Motor neuron (in vitro differentiated cells): ENCODE measurements at regions of chr1 and their contacts with region 1.

Region 1: DNA sequence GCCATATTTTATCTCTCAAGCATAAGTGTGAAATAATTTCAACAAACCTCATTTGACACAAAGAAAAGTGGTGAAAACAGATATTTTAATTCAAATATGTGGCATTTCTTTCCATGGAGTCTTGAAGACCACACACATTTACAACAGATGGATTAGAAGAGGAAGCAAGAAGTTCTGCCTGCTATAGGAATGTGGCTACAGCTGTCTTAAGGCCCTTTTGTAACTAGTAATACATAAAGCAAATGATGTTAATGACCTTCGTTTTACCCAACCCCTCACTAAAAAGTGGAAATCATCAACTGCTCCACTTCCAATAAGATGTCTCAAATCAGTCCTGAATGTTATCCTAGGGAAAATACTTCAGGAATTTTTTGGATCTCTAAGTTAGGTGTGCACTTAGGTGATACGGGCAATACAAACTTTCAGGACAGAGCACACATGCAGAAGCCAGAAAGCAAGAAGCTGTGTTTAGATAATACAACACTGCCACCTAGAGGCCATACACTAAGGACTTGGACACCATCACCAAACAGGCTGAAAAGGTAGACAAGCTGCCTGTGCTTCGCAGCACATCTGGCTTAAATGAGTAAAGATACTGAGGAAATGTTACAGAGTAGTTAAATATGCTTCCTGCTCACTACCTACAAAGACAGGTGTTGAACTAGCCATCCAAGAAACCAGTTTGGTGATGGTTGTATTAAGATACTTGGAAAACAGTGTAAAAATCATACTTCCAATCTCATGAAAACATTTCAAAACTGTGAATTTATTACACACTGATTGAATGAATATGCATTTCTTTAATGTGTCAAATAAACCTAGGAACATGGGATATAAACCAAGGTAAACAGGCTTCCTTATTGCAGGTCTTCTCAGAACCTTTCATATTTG is 24.4 kb downstream of the RRAGC start:
- ATAC-seq: peak; percentile 67 to 97 (median 95)
- H3K4me3 ChIP-seq: no peak overlapping the region
- H3K27ac ChIP-seq: no peak overlapping the region
- H3K4me1 ChIP-seq: peaks cover 5 to 8% of the 10 kb centered on the region in 2 donors

Region 2: DNA sequence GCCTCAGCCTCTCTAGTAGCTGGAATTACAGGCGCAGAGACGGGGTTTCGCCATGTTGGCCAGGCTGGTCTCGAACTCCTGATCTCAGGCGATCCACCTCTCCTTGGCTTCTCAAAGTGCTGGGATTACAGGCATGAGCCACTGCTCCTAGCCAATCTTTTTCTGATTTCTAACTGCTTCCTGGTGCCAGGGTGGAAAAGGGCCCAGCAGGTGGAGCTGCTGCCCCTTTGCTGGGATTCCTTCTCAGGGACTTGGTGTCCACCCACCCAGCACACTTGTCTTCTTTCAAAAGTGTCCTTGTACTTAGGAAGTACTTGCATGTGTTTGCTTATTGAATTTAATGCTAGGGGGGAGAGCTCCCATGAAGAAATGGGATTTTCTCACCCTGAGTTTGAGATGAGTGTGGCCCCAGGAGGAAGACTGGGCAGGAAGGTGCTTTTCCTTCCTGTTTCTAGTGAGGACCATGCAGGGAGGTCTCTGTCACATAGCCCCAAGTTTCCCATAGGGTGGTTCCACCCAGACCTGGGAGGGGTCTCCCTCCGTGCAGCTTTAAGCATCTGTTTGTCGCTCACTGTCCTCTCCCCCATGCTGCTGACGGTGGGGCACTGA is 808.5 kb before region 1 on chr1:
- in situ Hi-C with region 1: loop called in 4 of 9 experiments (anchors 10 to 25 kb)
- ATAC-seq: peak in 4 of 8 experiments; percentile 9 to 49 (median 10)
- H3K4me3 ChIP-seq: no peak overlapping the region
- H3K27ac ChIP-seq: no peak overlapping the region
- H3K4me1 ChIP-seq: peaks cover 35 to 43% of the 10 kb centered on the region in 2 donors

Region 3: GRCh38 chr1:39105061-39105840 is 270.1 kb after region 1 on chr1:
- in situ Hi-C with region 1: no loop called
- ATAC-seq: peak; percentile 53 to 71 (median 60)
- H3K4me3 ChIP-seq: peak overlapping the region; percentile 49 to 64 (median 55)
- H3K27ac ChIP-seq: peak overlapping the region; percentile 97 to 99
- H3K4me1 ChIP-seq: peaks cover 44 to 46% of the 10 kb centered on the region in 2 donors

Region 4: DNA sequence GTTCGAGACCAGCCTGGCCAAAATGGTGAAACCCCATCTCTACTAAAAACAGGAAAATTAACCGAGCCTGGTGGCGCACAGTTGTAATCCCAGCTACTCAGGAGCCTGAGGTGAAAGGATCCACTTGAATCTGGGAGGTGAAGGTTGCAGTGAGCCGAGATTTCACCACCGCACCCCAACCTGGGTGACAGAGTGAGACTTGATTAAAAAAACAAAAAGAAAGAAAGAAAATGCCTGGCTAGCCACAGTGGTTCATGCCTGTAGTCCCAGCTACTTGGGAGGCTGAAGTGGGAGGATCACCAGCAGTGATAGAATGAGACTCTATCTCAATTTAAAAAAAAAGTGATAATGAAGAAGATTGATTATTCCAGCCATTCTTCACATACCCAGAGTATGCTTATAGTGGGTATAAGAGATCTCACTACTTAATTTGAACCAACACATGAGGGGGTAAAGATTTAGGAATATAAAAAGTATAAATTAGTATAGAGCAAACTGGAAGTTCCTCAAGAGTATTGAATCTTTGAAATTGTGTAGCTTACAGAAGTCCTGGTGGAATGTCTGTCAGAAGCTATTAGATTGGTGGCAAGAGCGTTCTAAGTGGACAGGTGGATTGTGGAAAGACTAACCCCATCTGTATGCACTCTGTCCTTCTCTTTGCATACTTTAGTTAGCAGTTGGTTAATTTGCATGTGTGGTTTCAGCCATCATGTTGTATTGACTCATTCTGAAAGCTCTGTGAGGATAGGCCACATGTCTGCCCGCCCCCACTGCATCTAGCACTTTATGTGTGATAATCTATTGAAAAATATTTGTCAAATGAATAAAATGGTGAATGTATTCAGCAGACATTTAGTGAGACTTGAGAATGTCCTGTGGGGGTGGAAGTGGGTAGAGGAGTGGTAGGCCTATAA is 1351.0 kb after region 1 on chr1:
- in situ Hi-C with region 1: no loop called
- ATAC-seq: peak in 3 of 8 experiments; percentile 64 to 99 (median 97)
- H3K4me3 ChIP-seq: no peak overlapping the region
- H3K27ac ChIP-seq: no peak overlapping the region
- H3K4me1 ChIP-seq: no peaks in the 10 kb centered on the region